GM12878 (cell line): ENCODE measurements at regions of chr12 and their contacts with region 1.

Region 1: DNA sequence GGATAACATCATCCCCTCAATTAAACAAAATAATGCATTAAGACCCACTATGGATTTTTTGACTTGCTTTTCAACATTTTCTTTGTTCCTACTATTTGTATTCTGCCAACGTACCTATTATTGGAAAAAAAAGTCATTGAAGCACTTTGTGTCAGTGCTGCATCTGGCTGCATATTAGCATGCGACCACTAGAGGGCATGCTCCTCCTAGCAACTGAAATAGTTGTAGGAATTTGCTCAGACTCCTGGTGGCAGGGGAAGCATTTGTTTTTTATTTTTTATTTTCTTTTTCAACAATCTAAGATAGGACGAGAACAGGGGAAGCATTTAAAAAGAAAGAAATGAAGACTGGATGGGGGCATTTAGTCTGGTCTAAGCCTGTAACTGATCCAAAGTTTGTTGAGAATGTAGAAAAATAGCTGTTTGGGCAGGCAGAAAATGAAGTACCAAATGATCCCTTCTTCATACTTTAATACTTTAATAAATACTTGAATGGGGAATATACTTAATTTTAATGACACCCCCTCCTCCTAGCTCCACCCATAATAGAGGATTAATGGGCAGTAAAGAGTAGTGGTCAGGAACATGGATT is 14.5 kb upstream of the CLEC4A start:
- DNase-seq: peak; percentile 31
- ATAC-seq: peak; percentile 83
- H3K4me3 ChIP-seq: no peak overlapping the region
- H3K27ac ChIP-seq: no peak overlapping the region
- H3K4me1 ChIP-seq: no peaks in the 10 kb centered on the region
- H3K27me3 ChIP-seq: no peaks in the 10 kb centered on the region
- CTCF ChIP-seq: peak; percentile 86 to 98 (median 90)
- EP300 ChIP-seq: no peak
- POLR2A ChIP-seq: no peak
- RAD21 ChIP-seq: peak; percentile 99

Region 2: GRCh38 chr12:8026291-8026900 is 82.5 kb before region 1 on chr12:
- CTCF ChIA-PET with region 1: no interaction called
- POLR2A ChIA-PET with region 1: no interaction called
- RAD21 ChIA-PET with region 1: no interaction called
- SMC1A ChIA-PET with region 1: no interaction called
- in situ Hi-C with region 1: no loop called
- intact Hi-C with region 1: no loop called
- DNase-seq: peak; percentile 98
- ATAC-seq: peak; percentile 99
- H3K4me3 ChIP-seq: peak overlapping the region; percentile 83
- H3K27ac ChIP-seq: peak overlapping the region; percentile 97
- H3K4me1 ChIP-seq: no peaks in the 10 kb centered on the region
- H3K27me3 ChIP-seq: no peaks in the 10 kb centered on the region
- CTCF ChIP-seq: no peak
- EP300 ChIP-seq: no peak
- POLR2A ChIP-seq: no peak
- RAD21 ChIP-seq: no peak

Region 3: DNA sequence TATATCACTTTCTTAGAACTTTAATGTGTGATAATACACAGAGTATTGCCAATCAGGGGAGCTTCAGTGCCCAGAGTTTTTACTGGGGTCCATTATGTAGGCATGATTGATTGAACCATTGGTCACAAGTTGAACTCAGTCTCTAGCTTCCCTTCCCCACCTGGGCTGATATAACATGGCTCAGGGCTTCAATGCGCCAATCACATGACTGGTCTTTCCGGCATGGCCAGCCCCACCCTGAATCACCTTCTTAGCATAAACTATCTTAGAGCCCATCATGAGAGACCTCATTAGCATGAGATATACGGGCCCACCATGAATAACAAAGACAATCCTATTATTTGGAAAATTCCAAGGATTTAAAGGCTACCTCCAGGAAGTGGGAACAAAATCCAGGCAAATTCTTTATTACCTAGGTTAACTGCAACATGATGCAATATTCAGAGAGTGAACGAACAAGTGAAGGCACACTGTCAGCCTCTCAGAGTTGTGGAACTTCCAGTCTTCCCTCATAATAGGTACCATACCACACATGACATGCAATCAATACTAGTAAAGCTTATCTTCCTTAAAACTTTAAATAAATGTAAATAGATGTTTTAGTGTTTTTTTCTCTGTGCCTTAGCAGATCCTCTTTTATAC is 11.3 kb after region 1 on chr12:
- CTCF ChIA-PET with region 1: interaction called, 16 read pairs
- POLR2A ChIA-PET with region 1: no interaction called
- RAD21 ChIA-PET with region 1: no interaction called
- SMC1A ChIA-PET with region 1: no interaction called
- in situ Hi-C with region 1: no loop called
- intact Hi-C with region 1: no loop called
- DNase-seq: no peak
- ATAC-seq: no peak
- H3K4me3 ChIP-seq: no peak overlapping the region
- H3K27ac ChIP-seq: no peak overlapping the region
- H3K4me1 ChIP-seq: peaks cover 6% of the 10 kb centered on the region; the same call in 1 of the 2 replicates
- H3K27me3 ChIP-seq: no peaks in the 10 kb centered on the region
- CTCF ChIP-seq: no peak
- EP300 ChIP-seq: no peak
- POLR2A ChIP-seq: no peak
- RAD21 ChIP-seq: no peak

Region 4: DNA sequence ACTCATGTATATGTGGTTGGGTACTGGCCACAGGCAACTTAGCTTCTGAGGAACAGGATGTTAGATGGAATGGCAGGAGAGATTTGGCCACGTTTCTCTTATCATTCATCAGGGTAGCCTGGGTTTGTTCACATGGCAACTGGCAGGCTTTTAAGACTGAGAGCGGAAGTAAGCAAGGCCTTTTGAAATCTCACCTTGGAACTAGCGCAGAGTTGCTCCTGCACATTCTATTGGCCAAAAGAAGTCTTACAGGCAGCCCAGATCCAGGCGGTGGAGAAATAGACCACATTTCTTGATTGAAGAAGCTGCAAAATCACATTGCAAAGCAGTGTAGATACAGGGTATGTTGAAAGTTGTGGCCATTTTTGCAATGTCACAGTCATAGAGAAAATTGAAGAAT is 18.2 kb after region 1 on chr12:
- CTCF ChIA-PET with region 1: interaction called, 10 read pairs
- POLR2A ChIA-PET with region 1: no interaction called
- RAD21 ChIA-PET with region 1: no interaction called
- SMC1A ChIA-PET with region 1: no interaction called
- in situ Hi-C with region 1: no loop called
- intact Hi-C with region 1: no loop called
- DNase-seq: no peak
- ATAC-seq: no peak
- H3K4me3 ChIP-seq: no peak overlapping the region
- H3K27ac ChIP-seq: no peak overlapping the region
- H3K4me1 ChIP-seq: peaks cover 6% of the 10 kb centered on the region; the same call in 1 of the 2 replicates
- H3K27me3 ChIP-seq: no peaks in the 10 kb centered on the region
- CTCF ChIP-seq: no peak
- EP300 ChIP-seq: no peak
- POLR2A ChIP-seq: no peak
- RAD21 ChIP-seq: no peak

Region 5: DNA sequence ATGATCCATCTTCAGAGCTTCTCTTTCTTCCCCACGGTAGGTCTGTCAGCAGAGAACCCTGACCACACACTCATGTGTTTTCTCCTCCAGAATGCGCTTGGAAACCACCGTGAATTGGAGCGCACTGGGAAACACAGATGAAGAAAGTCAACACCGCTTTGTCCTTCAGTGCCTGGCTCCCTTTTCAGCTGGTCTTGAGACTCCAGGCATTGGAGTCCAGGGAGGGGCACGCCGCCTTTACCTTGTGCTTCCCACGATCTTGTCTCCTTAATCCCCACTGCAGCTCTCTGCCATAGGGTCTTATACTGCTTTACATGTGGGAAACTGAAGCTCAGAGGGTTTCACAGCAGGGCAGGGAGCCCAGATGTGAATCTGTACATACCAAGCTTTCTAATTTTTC is 117.5 kb after region 1 on chr12:
- CTCF ChIA-PET with region 1: interaction called, 61 read pairs
- POLR2A ChIA-PET with region 1: no interaction called
- RAD21 ChIA-PET with region 1: interaction called, 21 read pairs
- SMC1A ChIA-PET with region 1: interaction called, 11 read pairs
- in situ Hi-C with region 1: no loop called
- intact Hi-C with region 1: loop called (anchors 1 kb)
- DNase-seq: no peak
- ATAC-seq: no peak
- H3K4me3 ChIP-seq: peak overlapping the region; percentile 66; the same call in 1 of the 2 replicates
- H3K27ac ChIP-seq: peak overlapping the region; percentile 52
- H3K4me1 ChIP-seq: peaks cover 4% of the 10 kb centered on the region
- H3K27me3 ChIP-seq: no peaks in the 10 kb centered on the region
- CTCF ChIP-seq: no peak
- EP300 ChIP-seq: no peak
- POLR2A ChIP-seq: no peak
- RAD21 ChIP-seq: no peak